ENCODE measurements at regions of chr6 and their contacts with region 1.

Region 1: GRCh38 chr6:36765594-36766398 is 68.2 kb downstream of the RAB44 start:
- DNase-seq: peak; percentile 91
- H3K4me3 Mint-ChIP-seq: no peak overlapping the region
- H3K27ac Mint-ChIP-seq: no peak overlapping the region
- H3K4me1 Mint-ChIP-seq: peaks cover 45% of the 10 kb centered on the region
- H3K27me3 Mint-ChIP-seq: no peaks in the 10 kb centered on the region

Region 2: GRCh38 chr6:36788768-36789167 is 23.0 kb after region 1 on chr6:
- CTCF ChIA-PET with region 1: interaction called, 488 read pairs
- DNase-seq: peak; percentile 29
- H3K4me3 Mint-ChIP-seq: no peak overlapping the region
- H3K27ac Mint-ChIP-seq: no peak overlapping the region
- H3K4me1 Mint-ChIP-seq: peaks cover 8% of the 10 kb centered on the region
- H3K27me3 Mint-ChIP-seq: peaks cover 81% of the 10 kb centered on the region

Region 3: DNA sequence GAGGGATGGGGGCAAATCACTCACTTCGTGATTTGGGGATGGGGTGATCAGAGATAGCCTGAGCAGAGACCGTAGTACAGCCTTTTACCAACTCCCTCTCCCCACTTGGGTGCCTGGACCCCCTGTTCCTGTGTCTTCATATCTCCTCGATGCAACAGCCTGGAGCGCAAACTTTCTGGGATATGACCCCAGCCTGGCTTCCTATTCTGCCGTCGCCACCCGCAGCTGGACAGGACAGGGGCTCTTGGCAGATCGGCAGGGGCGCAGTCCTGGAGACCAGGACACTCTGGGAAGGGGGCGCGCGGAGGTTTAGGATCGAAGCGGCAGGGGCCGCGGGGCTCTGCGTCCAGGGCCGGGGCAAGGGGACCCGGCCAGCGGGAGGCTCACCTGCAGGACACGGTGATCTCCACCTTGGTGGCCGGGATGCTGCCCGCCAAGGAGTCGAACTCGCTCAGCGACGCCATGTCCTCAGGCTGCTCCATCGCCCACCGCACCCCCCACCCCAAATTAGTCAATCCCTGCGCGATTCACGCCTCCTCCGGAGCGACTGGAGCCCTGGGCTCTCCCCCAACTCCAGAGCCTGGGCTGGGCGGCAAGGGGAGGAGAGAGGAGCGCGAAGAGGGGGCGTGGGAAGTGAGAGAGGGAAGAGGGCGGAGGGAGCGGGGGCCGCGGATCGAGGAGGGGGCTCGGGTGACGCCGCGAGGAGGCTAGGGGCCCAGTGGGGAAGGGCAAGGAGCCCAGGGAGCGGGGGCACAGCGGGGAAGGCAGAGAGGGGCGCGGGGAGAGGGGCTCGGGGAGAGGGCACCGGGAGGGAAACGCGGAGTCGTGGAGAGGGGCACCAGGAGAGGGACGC is 73.3 kb after region 1 on chr6 and contains the start of gene CPNE5:
- CTCF ChIA-PET with region 1: interaction called, 11 read pairs
- DNase-seq: peak; percentile 30
- H3K4me3 Mint-ChIP-seq: peak within 1 kb of the TSS; percentile 72
- H3K27ac Mint-ChIP-seq: no peak within 1 kb of the TSS
- H3K4me1 Mint-ChIP-seq: peaks cover 18% of the 10 kb centered on the region
- H3K27me3 Mint-ChIP-seq: peaks cover 80% of the 10 kb centered on the region

Region 4: DNA sequence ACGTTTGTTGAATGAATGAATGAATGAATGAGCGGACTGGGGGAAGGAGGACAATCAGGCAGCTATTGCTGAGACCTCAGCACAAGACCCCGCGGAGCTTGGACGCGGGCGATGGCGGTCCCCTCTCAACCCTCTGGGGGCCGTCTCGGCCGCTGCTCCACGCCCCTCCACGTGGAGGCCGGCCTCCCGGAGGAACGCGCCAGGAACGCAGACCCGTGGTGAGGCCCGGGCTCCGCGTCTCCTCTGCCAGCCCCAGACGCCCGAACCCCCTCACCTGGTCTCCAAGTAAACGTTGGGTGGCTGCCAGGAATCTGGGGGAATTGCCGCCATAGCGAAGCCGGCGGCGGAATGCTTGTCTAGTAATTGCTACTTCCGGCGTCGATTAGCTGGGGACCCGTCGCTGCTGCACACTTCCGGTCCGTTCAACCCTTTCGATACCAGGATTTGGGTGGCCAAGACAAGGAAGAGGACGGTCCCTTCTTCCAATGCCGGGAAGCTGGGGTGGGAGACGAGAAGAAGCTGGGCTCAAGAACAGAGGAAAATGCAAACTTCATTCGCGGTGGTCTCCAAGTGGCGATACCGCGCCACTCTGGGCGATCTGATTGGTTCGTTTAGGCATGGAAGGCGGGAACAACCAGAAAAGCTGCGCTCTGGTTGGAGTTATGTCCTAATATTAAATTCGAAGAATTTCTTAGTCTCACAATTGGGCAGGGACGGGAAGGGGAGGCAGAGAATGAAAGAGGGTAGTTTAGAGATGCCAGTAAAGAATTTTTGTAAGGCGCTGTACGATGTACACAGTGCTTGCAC is 108.8 kb after region 1 on chr6 and contains the start of gene PPIL1:
- CTCF ChIA-PET with region 1: interaction called, 26 read pairs
- DNase-seq: peak; percentile 86
- H3K4me3 Mint-ChIP-seq: peak within 1 kb of the TSS; percentile 92
- H3K27ac Mint-ChIP-seq: peak within 1 kb of the TSS; percentile 96
- H3K4me1 Mint-ChIP-seq: peaks cover 62% of the 10 kb centered on the region
- H3K27me3 Mint-ChIP-seq: peaks cover 8% of the 10 kb centered on the region

Measured in activated naive CD4-positive, alpha-beta T cell treated with anti-CD3 and anti-CD28 coated beads, Interleukin-2, amount 10 ng/mL, durations not matched to agents 7 days and 5 days (primary cell).